SK-N-SH (cell line): ENCODE measurements at regions of chr9 and their contacts with region 1.

Region 1: DNA sequence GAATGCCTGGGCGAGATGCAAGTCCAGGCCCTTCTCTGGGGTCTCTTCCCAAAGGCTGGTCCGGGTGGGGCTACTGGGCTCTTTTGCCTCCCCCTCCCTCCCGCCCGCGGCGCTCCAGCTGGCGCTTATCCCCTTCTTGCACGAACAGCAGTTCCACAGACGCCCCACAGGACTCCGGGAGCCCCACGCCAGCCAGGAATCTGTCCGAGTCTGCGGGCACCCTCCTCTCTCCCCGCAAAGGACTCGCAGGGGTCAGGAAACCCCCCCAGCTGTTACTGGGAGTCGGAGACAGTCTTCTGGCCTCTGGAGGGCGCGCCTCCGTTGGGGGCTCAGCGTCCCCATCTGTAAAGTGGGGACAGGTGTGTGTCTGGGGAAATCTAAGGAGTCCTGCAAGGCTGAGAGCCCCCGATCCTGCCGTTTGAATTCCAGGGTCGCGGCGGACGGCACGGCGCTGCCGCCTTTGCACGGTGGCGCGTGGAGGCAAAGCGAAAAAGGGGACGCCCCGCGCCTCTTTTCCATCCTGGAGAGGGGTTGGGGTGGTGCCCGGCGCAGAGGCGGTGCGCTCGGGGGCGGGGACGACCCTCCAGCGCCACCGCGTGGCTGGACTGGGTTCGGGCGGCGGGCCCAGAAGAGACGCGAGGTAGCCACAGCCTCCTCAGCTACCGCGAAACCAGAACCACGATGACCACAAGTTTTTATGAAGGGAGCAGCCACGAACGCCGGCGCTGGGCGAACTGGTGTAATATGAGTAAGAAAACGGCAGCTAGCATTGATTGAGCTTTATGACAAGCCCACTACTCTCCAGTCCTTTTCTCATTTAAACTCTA is 2.9 kb upstream of the CCIN start:
- DNase-seq: peak; percentile 96
- H3K4me3 ChIP-seq: peak overlapping the region; percentile 48 to 66
- H3K27ac ChIP-seq: peak overlapping the region in 1 of 2 experiments; percentile 62; a peak in 2 of 4 replicates
- H3K4me1 ChIP-seq: peaks cover 26 to 38% of the 10 kb centered on the region in 2 experiments; a peak in 3 of 4 replicates
- H3K27me3 ChIP-seq: no peaks in the 10 kb centered on the region
- CTCF ChIP-seq: peak; percentile 84
- EP300 ChIP-seq: no peak
- RAD21 ChIP-seq: peak; percentile 88

Region 2: DNA sequence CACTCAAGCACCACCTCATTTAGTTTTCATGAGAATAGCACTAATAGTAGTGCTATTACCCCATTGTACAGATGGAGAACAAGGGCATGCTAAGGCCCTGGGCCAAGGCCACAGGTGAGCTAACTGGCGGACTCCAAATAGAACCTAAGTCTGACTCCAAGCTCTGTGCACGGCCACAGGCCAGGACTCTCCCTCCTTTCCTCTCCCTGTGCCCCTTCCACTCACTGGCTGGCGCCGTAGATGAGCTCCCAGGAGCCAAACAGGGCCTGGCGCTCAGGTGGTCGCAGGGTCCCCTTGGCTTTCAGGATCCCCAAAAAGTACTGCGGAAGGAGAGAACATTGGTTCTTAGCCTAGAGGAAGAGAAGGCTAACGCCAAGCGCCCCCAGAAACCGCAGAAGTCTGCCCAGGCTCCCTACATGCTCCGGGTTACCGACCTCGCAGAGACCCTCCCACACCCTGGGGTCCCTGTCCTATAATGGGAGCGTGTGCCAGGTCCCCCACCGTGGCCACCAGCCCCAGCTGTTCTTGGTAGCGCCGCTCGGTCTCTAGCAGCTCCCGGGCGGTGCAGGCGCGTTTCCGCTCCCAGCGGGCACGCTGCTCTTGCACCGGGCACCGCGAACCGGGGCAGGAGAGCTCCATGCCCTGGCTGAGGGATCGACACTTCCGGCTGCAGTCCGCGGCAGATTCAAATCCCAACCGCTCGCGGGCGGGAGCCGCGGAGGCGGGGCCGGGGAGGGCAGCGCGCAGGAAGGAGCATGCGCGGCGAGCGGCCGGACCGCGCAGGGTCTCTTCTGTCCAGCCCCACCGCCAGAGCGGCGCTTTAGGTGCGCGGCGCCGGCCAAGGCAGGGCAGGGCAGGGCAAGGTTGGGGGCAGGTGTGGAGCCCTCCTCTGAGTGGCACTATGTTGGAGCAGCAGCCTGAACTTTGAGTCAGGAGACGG is 501.5 kb before region 1 on chr9 and contains the start of gene ARHGEF39:
- CTCF ChIA-PET with region 1: no interaction called
- POLR2A ChIA-PET with region 1: no interaction called
- DNase-seq: peak; percentile 98
- H3K4me3 ChIP-seq: peak within 1 kb of the TSS; percentile 61 to 65
- H3K27ac ChIP-seq: peak within 1 kb of the TSS; percentile 53 to 80
- H3K4me1 ChIP-seq: peaks cover 0 to 12% of the 10 kb centered on the region in 2 experiments; a peak in 1 of 4 replicates
- H3K27me3 ChIP-seq: no peaks in the 10 kb centered on the region
- CTCF ChIP-seq: peak; percentile 55
- EP300 ChIP-seq: peak in 1 of 2 experiments; percentile 53; a peak in 2 of 4 replicates
- RAD21 ChIP-seq: no peak; the same call in 1 of the 2 replicates
- polyA plus RNA-seq, gene ARHGEF39: 4.9 and 5.2 TPM in 2 replicates

Region 3: DNA sequence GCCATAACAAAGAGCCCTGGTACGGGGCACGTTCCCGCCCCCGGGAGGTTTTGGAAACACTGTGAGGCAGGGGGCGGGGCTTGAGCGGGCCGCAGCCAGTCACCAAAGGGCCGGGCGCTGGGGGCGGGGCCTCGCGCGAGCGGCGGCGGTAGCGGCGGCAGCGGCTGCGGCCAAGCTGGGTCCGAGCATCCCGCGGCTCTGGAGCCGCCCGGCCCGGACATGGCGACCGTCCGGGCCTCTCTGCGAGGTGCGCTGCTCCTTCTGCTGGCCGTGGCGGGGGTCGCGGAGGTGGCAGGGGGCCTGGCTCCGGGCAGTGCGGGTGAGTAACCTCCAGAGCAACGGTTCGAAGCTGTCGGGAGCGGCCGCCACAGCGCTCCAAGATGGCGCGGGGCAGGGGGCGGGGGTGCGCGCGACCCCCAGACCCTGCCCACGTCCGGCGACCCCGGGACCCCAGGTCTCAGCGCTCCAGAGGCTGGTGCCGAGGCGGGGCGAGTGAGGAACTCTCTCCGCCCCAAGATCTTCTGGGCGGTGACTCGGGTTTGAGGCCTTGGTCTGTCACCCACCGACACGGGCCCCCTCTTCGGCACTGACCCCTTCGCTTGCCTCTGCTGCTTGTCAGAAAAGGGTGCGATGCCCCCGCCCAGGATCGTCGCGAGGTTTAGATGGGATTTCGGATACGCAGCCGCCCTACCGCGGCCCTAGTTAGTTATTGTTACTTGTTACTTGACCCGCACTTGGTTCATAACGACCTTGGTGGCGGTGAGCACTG is 129.3 kb before region 1 on chr9 and contains the start of gene RECK:
- CTCF ChIA-PET with region 1: interaction called, 11 read pairs
- POLR2A ChIA-PET with region 1: no interaction called
- DNase-seq: peak; percentile 96
- H3K4me3 ChIP-seq: peak within 1 kb of the TSS; percentile 72 to 81
- H3K27ac ChIP-seq: peak within 1 kb of the TSS; percentile 73 to 79
- H3K4me1 ChIP-seq: peaks cover 6 to 17% of the 10 kb centered on the region in 2 experiments
- H3K27me3 ChIP-seq: no peaks in the 10 kb centered on the region
- CTCF ChIP-seq: no peak
- EP300 ChIP-seq: 0 out of 4 replicates have a peak, but pooled peaks of 1 of the 2 experiments have one; percentile 11
- RAD21 ChIP-seq: no peak
- polyA plus RNA-seq, gene RECK: 22.8 and 27.3 TPM in 2 replicates

Region 4: GRCh38 chr9:36102742-36103495 is 63.4 kb before region 1 on chr9:
- CTCF ChIA-PET with region 1: interaction called, 167 read pairs
- POLR2A ChIA-PET with region 1: interaction called, 7 read pairs
- DNase-seq: peak; percentile 74
- H3K4me3 ChIP-seq: no peak overlapping the region
- H3K27ac ChIP-seq: peak overlapping the region; percentile 73 to 90; a peak in 3 of 4 replicates
- H3K4me1 ChIP-seq: peaks cover 0 to 32% of the 10 kb centered on the region in 2 experiments; a peak in 3 of 4 replicates
- H3K27me3 ChIP-seq: no peaks in the 10 kb centered on the region
- CTCF ChIP-seq: peak; percentile 84
- EP300 ChIP-seq: no peak
- RAD21 ChIP-seq: peak; percentile 88

Region 5: GRCh38 chr9:36136272-36136893 is 29.9 kb before region 1 on chr9 and contains the start of gene GLIPR2:
- CTCF ChIA-PET with region 1: interaction called, 113 read pairs
- POLR2A ChIA-PET with region 1: interaction called, 12 read pairs
- DNase-seq: peak; percentile 92
- H3K4me3 ChIP-seq: peak within 1 kb of the TSS; percentile 67 to 83
- H3K27ac ChIP-seq: no peak within 1 kb of the TSS; a peak in 1 of 4 replicates
- H3K4me1 ChIP-seq: peaks cover 0 to 21% of the 10 kb centered on the region in 2 experiments; a peak in 3 of 4 replicates
- H3K27me3 ChIP-seq: no peaks in the 10 kb centered on the region
- CTCF ChIP-seq: peak; percentile 40
- EP300 ChIP-seq: no peak
- RAD21 ChIP-seq: no peak; the same call in 1 of the 2 replicates
- polyA plus RNA-seq, gene GLIPR2: 38.3 and 40.1 TPM in 2 replicates

Region 6: DNA sequence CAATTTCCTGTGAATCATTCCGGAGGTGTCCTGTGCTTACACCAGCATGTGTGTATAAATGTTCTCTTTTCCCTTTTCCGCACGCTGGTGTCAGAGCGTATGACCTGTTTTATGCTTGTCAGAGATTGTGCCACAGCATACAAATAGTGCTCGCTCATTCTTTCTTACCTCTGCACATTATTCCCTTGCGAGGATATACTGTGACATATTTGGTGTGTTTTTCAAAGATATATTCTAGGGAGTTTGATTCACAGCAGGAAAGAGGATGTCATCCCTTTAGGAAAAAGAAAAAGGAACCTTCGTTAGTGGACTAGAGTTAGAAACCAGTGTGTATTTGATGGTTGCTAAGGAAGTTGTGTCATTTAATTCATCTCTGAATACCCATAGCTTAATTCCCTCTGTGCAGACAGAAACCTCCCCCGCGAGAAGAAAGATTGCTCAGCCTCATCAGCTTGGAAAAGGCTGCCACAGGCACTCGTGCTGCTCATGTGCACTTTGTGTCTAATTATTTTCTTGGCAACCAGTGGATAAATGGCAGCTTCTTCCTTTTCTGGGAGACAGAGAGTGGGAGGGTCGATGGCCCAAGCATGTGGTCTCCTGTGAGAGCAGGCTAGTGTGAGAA is 11.9 kb before region 1 on chr9:
- CTCF ChIA-PET with region 1: interaction called, 105 read pairs
- POLR2A ChIA-PET with region 1: interaction called, 38 read pairs
- DNase-seq: no peak
- H3K4me3 ChIP-seq: no peak overlapping the region
- H3K27ac ChIP-seq: peak overlapping the region; percentile 61 to 92
- H3K4me1 ChIP-seq: peaks cover 9 to 45% of the 10 kb centered on the region in 2 experiments; a peak in 3 of 4 replicates
- H3K27me3 ChIP-seq: no peaks in the 10 kb centered on the region
- CTCF ChIP-seq: no peak
- EP300 ChIP-seq: no peak
- RAD21 ChIP-seq: no peak

Region 7: GRCh38 chr9:36190388-36191287 is 24.3 kb after region 1 on chr9 and contains the start of gene CLTA:
- CTCF ChIA-PET with region 1: interaction called, 14 read pairs
- POLR2A ChIA-PET with region 1: interaction called, 4 read pairs
- DNase-seq: peak; percentile 98
- H3K4me3 ChIP-seq: peak within 1 kb of the TSS; percentile 84 to 94
- H3K27ac ChIP-seq: peak within 1 kb of the TSS; percentile 83 to 87
- H3K4me1 ChIP-seq: peaks cover 6 to 27% of the 10 kb centered on the region in 2 experiments
- H3K27me3 ChIP-seq: no peaks in the 10 kb centered on the region
- CTCF ChIP-seq: peak; percentile 77
- EP300 ChIP-seq: peak in 1 of 2 experiments; percentile 42; a peak in 2 of 4 replicates
- RAD21 ChIP-seq: peak; percentile 28
- polyA plus RNA-seq, gene CLTA: 222 and 260 TPM in 2 replicates

Region 8: GRCh38 chr9:36237230-36237629 is 70.9 kb after region 1 on chr9:
- CTCF ChIA-PET with region 1: no interaction called
- POLR2A ChIA-PET with region 1: no interaction called
- DNase-seq: no peak
- H3K4me3 ChIP-seq: no peak overlapping the region
- H3K27ac ChIP-seq: no peak overlapping the region
- H3K4me1 ChIP-seq: no peaks in the 10 kb centered on the region
- H3K27me3 ChIP-seq: no peaks in the 10 kb centered on the region
- CTCF ChIP-seq: no peak
- EP300 ChIP-seq: no peak
- RAD21 ChIP-seq: no peak

Region 9: DNA sequence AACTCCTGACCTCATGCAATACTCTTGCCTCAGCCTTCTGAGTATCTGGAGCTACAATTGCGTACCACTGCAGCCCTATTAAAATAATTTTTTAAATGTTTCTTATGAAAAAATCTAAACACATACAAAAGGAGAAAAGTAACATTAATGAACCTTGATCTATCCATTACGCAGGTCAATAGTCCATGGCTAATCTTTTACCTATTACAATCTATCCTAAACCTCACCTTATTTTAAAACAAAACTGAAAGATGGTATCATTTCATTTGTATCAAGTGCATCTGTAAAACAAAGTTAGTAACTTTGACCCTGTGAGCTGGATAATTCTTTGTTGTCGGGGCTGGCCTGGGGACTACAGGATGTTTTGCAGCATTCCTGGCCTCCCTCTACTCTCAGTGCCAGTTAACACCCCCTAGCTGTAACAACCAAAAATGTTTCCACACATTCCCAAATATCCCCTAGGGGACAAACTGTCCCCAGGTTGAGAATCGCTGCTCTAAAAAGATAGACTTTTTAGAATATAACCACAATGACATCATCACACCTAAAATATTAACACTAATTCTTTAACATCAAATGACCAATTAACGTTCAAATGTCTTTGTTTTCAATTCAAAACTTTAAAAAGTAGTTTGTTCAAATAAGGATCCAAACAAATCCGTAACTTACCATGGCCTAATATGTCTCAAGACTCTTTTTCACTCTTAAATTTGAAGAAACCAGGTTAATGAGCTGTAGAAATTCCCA is 179.0 kb after region 1 on chr9:
- CTCF ChIA-PET with region 1: no interaction called
- POLR2A ChIA-PET with region 1: no interaction called
- DNase-seq: no peak
- H3K4me3 ChIP-seq: no peak overlapping the region
- H3K27ac ChIP-seq: no peak overlapping the region
- H3K4me1 ChIP-seq: no peaks in the 10 kb centered on the region
- H3K27me3 ChIP-seq: no peaks in the 10 kb centered on the region
- CTCF ChIP-seq: no peak
- EP300 ChIP-seq: no peak
- RAD21 ChIP-seq: no peak

Region 10: DNA sequence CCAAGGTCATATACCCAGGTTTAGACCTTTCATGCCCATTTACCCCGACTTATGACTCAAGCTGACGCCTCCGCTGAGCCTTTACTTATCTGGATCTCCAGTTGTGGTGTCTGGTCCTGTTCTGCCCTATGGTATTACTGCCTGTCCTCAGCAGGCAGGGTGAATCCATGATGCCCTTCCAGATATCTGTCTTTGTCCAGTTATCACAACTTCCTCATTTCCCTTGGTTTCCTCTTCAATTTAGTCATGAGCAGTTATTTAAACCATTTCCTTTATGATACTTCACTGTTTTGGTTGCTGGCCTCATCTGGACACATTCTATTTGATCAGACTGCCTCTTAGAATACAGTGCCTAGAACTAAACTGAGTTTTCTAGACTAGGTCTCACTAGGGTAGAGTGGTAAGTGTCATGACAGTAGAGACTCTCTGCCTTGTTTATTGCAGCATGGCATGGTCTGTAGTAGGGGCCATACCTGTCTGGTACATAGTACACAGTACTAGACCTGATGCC is 499.7 kb after region 1 on chr9:
- CTCF ChIA-PET with region 1: no interaction called
- POLR2A ChIA-PET with region 1: no interaction called
- DNase-seq: no peak
- H3K4me3 ChIP-seq: no peak overlapping the region
- H3K27ac ChIP-seq: peak overlapping the region; percentile 47 to 63; a peak in 3 of 4 replicates
- H3K4me1 ChIP-seq: peaks cover 0 to 8% of the 10 kb centered on the region in 2 experiments; a peak in 2 of 4 replicates
- H3K27me3 ChIP-seq: no peaks in the 10 kb centered on the region
- CTCF ChIP-seq: no peak
- EP300 ChIP-seq: no peak
- RAD21 ChIP-seq: no peak